Stomach (tissue), 19 donors: ENCODE measurements at regions of chr1 and their contacts with region 1.

Region 1: GRCh38 chr1:27603681-27604578 is at the start of gene AHDC1:
- DNase-seq: peak; percentile 95 to 97
- H3K4me3 ChIP-seq: peak within 1 kb of the TSS; percentile 79 to 98 (median 90)
- H3K27ac ChIP-seq: peak within 1 kb of the TSS; percentile 89 to 99 (median 96)
- H3K4me1 ChIP-seq: peaks cover 36 to 66% (median 62%) of the 10 kb centered on the region in 4 donors
- H3K27me3 ChIP-seq: no peaks in the 10 kb centered on the region
- CTCF ChIP-seq: peak in 2 of 7 experiments; percentile 16 to 18
- EP300 ChIP-seq: no peak
- POLR2A ChIP-seq: peak in 2 of 4 donors; percentile 33 to 71
- total RNA-seq, gene AHDC1: 10.8 to 95.0 (median 35.1) TPM

Region 2: GRCh38 chr1:27300341-27301051 is 303.4 kb before region 1 on chr1:
- intact Hi-C with region 1: loop called (anchors 10 kb)
- DNase-seq: peak; percentile 85 to 97
- H3K4me3 ChIP-seq: no peak overlapping the region
- H3K27ac ChIP-seq: peak overlapping the region; percentile 37 to 90 (median 88)
- H3K4me1 ChIP-seq: peaks cover 15 to 51% (median 31%) of the 10 kb centered on the region in 4 donors
- H3K27me3 ChIP-seq: no peaks in the 10 kb centered on the region
- CTCF ChIP-seq: peak in 6 of 7 experiments; percentile 88 to 100 (median 99)
- EP300 ChIP-seq: no peak
- POLR2A ChIP-seq: no peak

Region 3: GRCh38 chr1:27332536-27333281 is 271.2 kb before region 1 on chr1:
- intact Hi-C with region 1: no loop called
- DNase-seq: peak; percentile 63 to 77
- H3K4me3 ChIP-seq: no peak overlapping the region
- H3K27ac ChIP-seq: peak overlapping the region in 1 of 5 donors; percentile 8
- H3K4me1 ChIP-seq: peaks cover 0 to 25% (median 12%) of the 10 kb centered on the region in 4 donors
- H3K27me3 ChIP-seq: no peaks in the 10 kb centered on the region
- CTCF ChIP-seq: peak in 5 of 7 experiments; percentile 74 to 89 (median 82)
- EP300 ChIP-seq: no peak
- POLR2A ChIP-seq: no peak

Region 4: DNA sequence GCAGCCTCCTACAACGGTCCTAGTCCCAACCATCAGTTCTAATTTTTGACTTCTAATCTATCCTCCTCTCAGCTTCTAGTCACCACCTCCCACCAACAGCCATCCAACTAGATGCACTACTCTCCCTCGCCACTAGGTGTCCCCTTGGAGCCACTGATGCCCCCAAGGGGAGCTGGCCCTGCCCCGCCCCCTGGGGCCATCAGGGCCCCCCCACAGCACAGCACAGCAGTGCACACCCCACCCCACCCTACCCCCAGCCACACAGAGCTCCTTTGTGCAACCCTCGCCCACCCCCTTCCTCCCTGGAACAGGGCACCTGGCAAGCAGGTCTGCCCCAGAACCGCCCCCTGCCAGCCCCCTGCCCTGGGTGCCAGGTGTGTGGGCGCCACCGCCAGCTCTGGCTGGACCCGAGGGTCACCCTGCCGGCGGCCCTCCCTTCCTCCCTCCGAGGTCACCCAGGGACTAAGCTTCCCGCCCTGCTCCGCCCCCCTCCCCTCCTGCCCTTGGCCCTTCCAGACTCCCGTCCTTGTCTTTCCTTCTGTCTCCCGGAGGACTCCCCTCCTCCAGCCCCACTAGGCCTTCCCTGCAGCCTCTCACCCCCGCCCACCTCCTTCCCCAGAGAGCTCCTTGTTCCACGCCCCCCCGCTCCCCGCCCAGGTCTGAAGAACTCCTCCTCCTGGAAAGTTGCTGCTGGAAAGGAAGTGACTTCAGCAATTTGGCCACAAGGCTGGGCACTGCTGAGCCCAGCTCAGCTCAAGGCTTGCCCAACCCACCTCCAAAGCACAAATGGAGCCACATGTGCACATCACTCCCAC is 46.9 kb before region 1 on chr1:
- intact Hi-C with region 1: loop called (anchors 5 kb)
- DNase-seq: peak; percentile 89 to 96
- H3K4me3 ChIP-seq: peak overlapping the region; percentile 8 to 27 (median 18)
- H3K27ac ChIP-seq: peak overlapping the region; percentile 80 to 97 (median 87)
- H3K4me1 ChIP-seq: peaks cover 63 to 91% (median 72%) of the 10 kb centered on the region in 4 donors
- H3K27me3 ChIP-seq: no peaks in the 10 kb centered on the region
- CTCF ChIP-seq: peak in 5 of 7 experiments; percentile 90 to 97 (median 93)
- EP300 ChIP-seq: no peak
- POLR2A ChIP-seq: no peak